Dorsolateral prefrontal cortex (tissue), 120 donors: ENCODE measurements at regions of chr18 and their contacts with region 1.

Region 1: DNA sequence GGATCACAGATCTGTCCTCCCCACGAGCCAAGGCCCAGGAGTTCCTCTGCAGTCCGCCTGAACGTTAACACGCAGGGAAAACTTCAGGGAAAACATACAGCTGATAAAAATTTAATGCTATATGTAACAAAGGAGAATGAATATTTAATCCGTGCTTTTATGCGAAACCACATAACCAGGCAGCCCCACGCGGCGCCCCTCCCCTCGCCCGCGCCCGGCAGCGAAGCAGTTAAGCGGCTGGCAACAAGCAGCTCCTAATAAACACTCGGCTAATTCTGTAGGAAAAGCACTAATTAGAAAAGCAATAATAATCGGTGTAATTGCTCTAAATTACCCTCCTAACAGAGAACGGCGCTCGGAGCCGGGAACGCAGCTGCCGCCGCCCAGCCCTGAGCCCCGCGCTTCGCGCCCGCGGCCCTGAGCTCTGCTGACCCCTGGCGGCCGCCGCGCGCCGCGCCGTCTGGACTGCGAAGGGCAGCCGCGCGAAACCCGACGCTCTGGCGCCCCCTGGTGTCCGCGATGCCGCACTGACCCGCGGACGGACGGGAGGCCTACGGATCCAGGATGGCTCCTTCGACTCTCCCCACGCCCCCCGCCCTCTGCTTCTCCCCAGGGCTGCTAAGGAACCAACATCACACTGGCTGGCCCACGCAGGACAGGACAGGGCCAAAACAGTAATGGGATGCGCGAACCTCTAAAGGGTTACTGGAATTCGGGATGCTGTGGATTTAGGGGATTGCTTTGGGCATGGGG is 181.4 kb downstream of the SMAD2 start:
- DNase-seq: peak in 9 of 10 donors; percentile 58 to 86 (median 70)
- H3K4me3 ChIP-seq: peak overlapping the region in 58 of 59 donors; percentile 17 to 66 (median 47)
- H3K27ac ChIP-seq: no peak overlapping the region
- H3K27me3 ChIP-seq: peaks cover 0 to 7% (median 0%) of the 10 kb centered on the region in 45 donors
- CTCF ChIP-seq: peak; percentile 85 to 100 (median 100)

Region 2: DNA sequence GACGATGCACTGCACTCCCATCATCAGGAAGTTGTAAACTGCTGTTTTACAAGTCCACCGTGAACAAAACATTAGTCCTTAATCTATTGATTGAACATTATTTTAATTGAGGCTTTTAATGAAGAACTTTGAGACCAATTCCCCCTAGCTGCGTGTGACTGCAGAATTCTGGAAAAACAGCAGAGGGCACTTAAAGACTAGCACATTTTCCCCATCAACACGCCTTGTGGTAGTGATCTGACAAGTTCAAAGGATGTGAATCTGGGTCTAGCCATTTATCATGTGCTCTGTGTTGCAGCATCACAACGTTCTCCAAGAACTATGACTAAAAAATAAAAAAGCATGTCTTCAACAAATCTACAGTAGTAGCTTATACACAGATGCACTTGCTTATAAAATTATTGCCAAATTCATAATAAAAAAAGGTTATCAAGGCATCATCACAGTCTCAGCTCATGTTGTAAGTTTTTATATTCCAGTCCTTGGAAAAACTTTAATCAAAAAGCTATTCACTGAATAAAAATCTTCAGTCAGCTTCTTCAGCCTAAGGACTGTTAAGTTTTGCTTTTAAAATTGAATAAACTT is 533.4 kb before region 1 on chr18:
- intact Hi-C with region 1: loop called (anchors 1 to 2 kb)
- DNase-seq: peak in 5 of 10 donors; percentile 7 to 39 (median 34)
- H3K4me3 ChIP-seq: no peak overlapping the region
- H3K27ac ChIP-seq: no peak overlapping the region
- H3K27me3 ChIP-seq: peaks cover 0 to 47% (median 10%) of the 10 kb centered on the region in 45 donors
- CTCF ChIP-seq: peak; percentile 33 to 93 (median 78)

Region 3: DNA sequence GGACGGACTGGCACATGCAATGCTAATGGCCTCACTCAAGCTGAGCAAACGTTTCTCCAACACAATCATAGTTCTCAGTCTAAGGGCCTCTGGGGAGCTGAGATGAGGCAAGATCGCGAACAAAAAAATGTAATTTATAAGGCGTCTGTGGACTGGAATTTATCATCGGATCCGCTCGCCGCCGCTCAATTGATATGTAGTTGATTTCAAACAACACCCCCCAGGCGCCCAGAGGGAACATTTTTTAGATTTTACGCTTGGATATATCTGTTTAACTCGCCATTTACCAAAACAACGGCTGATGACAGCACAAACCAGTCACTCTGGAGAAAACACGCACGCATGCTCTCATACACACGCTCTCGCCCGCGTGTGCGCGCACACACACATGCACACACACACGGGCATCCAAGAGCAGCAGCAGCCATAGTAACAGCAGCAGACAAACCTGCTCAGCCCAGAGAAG is 154.4 kb before region 1 on chr18:
- intact Hi-C with region 1: loop called in 1 of 2 experiments (anchors 5 kb)
- DNase-seq: peak in 7 of 10 donors; percentile 21 to 62 (median 49)
- H3K4me3 ChIP-seq: peak overlapping the region in 58 of 59 donors; percentile 10 to 69 (median 46)
- H3K27ac ChIP-seq: peak overlapping the region in 38 of 59 donors; percentile 1 to 78 (median 54)
- H3K27me3 ChIP-seq: peaks cover 0 to 25% (median 0%) of the 10 kb centered on the region in 45 donors
- CTCF ChIP-seq: no peak